PC-9 (cell line): ENCODE measurements at regions of chr3 and their contacts with region 1.

Region 1: GRCh38 chr3:143478115-143478693 is 358.6 kb downstream of the CHST2 start:
- DNase-seq: no peak
- H3K4me3 ChIP-seq: no peak overlapping the region
- H3K27ac ChIP-seq: no peak overlapping the region
- H3K4me1 ChIP-seq: no peaks in the 10 kb centered on the region
- H3K27me3 ChIP-seq: no peaks in the 10 kb centered on the region
- CTCF ChIP-seq: no peak

Region 2: GRCh38 chr3:143040261-143040879 is 437.8 kb before region 1 on chr3:
- CTCF ChIA-PET with region 1: no interaction called
- POLR2A ChIA-PET with region 1: interaction called, 17 read pairs
- intact Hi-C with region 1: no loop called
- DNase-seq: peak in 1 of 2 experiments; percentile 44
- H3K4me3 ChIP-seq: no peak overlapping the region
- H3K27ac ChIP-seq: no peak overlapping the region
- H3K4me1 ChIP-seq: peaks cover 8% of the 10 kb centered on the region; the same call in 1 of the 2 replicates
- H3K27me3 ChIP-seq: no peaks in the 10 kb centered on the region
- CTCF ChIP-seq: peak; percentile 60

Region 3: DNA sequence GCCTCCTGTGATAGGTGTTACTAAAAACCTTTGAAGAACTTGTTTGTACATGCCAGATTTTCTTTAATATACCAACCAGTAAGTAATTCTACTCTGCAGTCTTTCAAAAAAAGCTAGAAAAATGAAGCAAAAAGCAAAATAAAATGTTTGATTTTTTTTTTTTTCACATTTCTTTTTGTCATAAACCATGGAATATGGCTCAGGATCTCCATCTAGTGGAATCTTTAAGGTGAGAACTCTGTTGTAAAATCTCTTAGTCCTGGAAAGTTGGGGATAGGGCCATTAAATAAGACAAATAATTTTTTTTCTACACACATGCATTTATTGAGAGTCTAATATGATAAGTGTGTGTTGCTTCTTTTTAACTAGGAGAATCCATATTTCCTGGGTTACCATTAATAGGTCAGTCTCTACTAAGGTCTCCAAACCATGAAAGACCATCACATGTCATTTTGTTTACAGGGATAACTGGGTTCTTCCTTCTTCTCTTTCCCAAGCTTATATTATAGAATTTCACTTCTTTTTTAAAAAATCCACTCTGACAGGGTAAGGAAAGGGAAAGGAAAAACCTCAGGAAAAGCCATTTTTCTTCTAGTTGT is 285.5 kb after region 1 on chr3:
- CTCF ChIA-PET with region 1: no interaction called
- POLR2A ChIA-PET with region 1: no interaction called
- intact Hi-C with region 1: no loop called
- DNase-seq: no peak
- H3K4me3 ChIP-seq: no peak overlapping the region
- H3K27ac ChIP-seq: no peak overlapping the region
- H3K4me1 ChIP-seq: no peaks in the 10 kb centered on the region
- H3K27me3 ChIP-seq: no peaks in the 10 kb centered on the region
- CTCF ChIP-seq: peak; percentile 52

Region 4: DNA sequence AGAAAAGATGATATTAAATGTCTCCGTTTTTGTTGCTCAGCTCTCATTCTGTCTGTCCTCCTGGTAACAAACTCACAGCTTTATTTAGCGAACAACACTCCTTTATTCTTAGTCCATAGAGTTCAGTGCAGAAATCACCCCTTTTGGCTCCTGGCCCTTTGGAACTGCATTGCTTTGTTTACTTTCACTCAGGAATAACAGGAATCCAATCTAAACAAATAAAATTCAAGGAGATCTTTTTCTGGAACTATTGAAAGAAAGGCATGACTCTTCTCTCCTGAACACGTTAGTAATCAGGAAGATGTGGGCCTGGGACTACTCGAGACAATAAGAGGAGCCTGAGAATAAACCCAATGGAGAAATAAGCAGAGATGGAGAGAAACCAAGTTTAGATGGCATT is 902.7 kb after region 1 on chr3:
- CTCF ChIA-PET with region 1: no interaction called
- POLR2A ChIA-PET with region 1: no interaction called
- intact Hi-C with region 1: no loop called
- DNase-seq: no peak
- H3K4me3 ChIP-seq: no peak overlapping the region
- H3K27ac ChIP-seq: no peak overlapping the region
- H3K4me1 ChIP-seq: peaks cover 11% of the 10 kb centered on the region
- H3K27me3 ChIP-seq: no peaks in the 10 kb centered on the region
- CTCF ChIP-seq: no peak